CD4-positive, alpha-beta T cell (primary cell): ENCODE measurements at regions of chr13 and their contacts with region 1.

Region 1: DNA sequence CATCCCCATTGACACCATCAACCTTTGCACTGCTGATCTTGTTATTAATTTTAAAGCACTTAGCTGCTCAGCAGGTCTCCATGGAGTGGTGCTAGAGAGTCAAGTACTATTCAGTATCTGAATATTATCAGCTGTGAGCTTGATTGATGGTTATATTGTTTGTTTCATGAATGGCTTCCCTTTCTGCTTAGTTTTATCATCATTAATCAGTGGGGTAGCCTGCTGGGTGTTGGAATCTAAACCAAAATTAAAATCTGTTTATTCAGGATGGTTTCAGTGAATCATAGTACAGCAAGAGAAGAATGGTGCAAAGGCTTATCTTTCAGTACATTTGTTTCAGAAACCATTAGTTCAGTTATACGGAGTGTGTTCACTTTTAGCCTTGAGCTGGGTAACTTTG is 42.5 kb upstream of the SCEL start:
- DNase-seq: peak in 2 of 14 experiments; percentile 23 to 29
- ATAC-seq: no peak
- H3K4me3 ChIP-seq: no peak overlapping the region
- H3K4me3 Mint-ChIP-seq: no peak overlapping the region
- H3K27ac ChIP-seq: no peak overlapping the region
- H3K27ac Mint-ChIP-seq: no peak overlapping the region
- H3K4me1 ChIP-seq: no peaks in the 10 kb centered on the region
- H3K4me1 Mint-ChIP-seq: no peaks in the 10 kb centered on the region
- H3K27me3 ChIP-seq: no peaks in the 10 kb centered on the region
- H3K27me3 Mint-ChIP-seq: no peaks in the 10 kb centered on the region
- CTCF ChIP-seq: peak; percentile 25

Region 2: DNA sequence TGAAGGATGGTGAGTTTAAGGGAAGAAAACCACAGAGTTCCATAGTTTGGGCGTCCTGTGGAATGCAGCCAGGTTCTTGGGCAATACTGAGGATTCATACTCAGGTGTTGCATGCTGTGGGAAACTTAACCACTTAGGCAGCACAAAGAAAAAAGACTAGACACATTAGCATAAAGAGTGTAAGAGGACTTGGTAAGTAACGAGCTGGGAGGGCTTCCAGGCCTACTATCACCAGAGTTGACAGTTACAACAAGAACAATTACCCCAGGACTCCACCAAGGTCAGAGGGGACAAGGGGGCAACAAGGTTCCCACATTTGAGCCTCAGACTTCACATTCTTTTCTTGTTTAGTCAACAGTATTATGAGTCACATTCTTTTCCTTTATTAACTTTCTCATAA is 640.0 kb before region 1 on chr13:
- CTCF ChIA-PET with region 1: no interaction called
- POLR2A ChIA-PET with region 1: no interaction called
- intact Hi-C with region 1: no loop called
- DNase-seq: no peak
- ATAC-seq: no peak
- H3K4me3 ChIP-seq: no peak overlapping the region
- H3K4me3 Mint-ChIP-seq: no peak overlapping the region
- H3K27ac ChIP-seq: no peak overlapping the region
- H3K27ac Mint-ChIP-seq: no peak overlapping the region
- H3K4me1 ChIP-seq: no peaks in the 10 kb centered on the region
- H3K4me1 Mint-ChIP-seq: no peaks in the 10 kb centered on the region
- H3K27me3 ChIP-seq: no peaks in the 10 kb centered on the region
- H3K27me3 Mint-ChIP-seq: no peaks in the 10 kb centered on the region
- CTCF ChIP-seq: no peak

Region 3: GRCh38 chr13:77480066-77480465 is 12.9 kb before region 1 on chr13:
- CTCF ChIA-PET with region 1: interaction called, 19 read pairs
- POLR2A ChIA-PET with region 1: interaction called, 3 read pairs
- intact Hi-C with region 1: no loop called
- DNase-seq: no peak
- ATAC-seq: no peak
- H3K4me3 ChIP-seq: no peak overlapping the region
- H3K4me3 Mint-ChIP-seq: no peak overlapping the region
- H3K27ac ChIP-seq: no peak overlapping the region
- H3K27ac Mint-ChIP-seq: no peak overlapping the region
- H3K4me1 ChIP-seq: no peaks in the 10 kb centered on the region
- H3K4me1 Mint-ChIP-seq: peaks cover 12% of the 10 kb centered on the region
- H3K27me3 ChIP-seq: no peaks in the 10 kb centered on the region
- H3K27me3 Mint-ChIP-seq: no peaks in the 10 kb centered on the region
- CTCF ChIP-seq: no peak

Region 4: DNA sequence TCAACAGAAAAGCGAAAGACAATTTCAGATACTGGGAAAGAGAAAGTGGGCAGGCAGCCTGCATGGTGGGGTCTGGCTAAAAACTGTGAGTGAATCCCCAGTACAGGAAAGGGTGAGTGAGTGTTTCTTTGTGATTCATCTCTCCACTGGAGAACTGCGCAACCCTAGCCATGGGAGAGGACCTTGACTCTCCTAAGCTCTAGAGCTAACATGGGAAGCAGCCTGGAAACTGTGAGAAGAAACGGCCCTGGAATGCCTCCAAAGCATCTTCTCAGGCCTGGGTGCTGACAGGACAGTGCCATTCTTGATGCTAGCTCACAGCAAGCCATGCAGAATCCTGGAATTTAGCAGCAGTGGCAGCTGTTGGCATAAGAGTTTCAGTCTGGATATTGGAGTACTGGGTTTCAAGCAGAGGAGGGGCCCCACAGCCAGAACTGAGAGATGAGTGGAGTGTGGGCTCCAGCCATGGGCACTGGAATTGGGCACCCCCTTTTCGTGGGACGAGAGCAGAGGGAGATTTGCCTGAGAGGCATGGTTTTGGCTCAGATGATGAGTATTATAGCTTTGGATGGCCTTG is 185.8 kb after region 1 on chr13:
- CTCF ChIA-PET with region 1: no interaction called
- POLR2A ChIA-PET with region 1: no interaction called
- intact Hi-C with region 1: no loop called
- DNase-seq: no peak
- ATAC-seq: no peak
- H3K4me3 ChIP-seq: no peak overlapping the region
- H3K4me3 Mint-ChIP-seq: no peak overlapping the region
- H3K27ac ChIP-seq: no peak overlapping the region
- H3K27ac Mint-ChIP-seq: no peak overlapping the region
- H3K4me1 ChIP-seq: no peaks in the 10 kb centered on the region
- H3K4me1 Mint-ChIP-seq: no peaks in the 10 kb centered on the region
- H3K27me3 ChIP-seq: peaks cover 3 to 15% of the 10 kb centered on the region in 2 experiments
- H3K27me3 Mint-ChIP-seq: peaks cover 60% of the 10 kb centered on the region
- CTCF ChIP-seq: no peak

Region 5: GRCh38 chr13:77751513-77752456 is 258.8 kb after region 1 on chr13:
- CTCF ChIA-PET with region 1: interaction called, 3 read pairs
- POLR2A ChIA-PET with region 1: no interaction called
- intact Hi-C with region 1: loop called (anchors 2 to 5 kb)
- DNase-seq: peak in 11 of 14 experiments; percentile 13 to 77 (median 22)
- ATAC-seq: peak; percentile 92
- H3K4me3 ChIP-seq: no peak overlapping the region
- H3K4me3 Mint-ChIP-seq: no peak overlapping the region
- H3K27ac ChIP-seq: no peak overlapping the region
- H3K27ac Mint-ChIP-seq: peak overlapping the region; percentile 3
- H3K4me1 ChIP-seq: no peaks in the 10 kb centered on the region
- H3K4me1 Mint-ChIP-seq: peaks cover 32% of the 10 kb centered on the region
- H3K27me3 ChIP-seq: no peaks in the 10 kb centered on the region
- H3K27me3 Mint-ChIP-seq: no peaks in the 10 kb centered on the region
- CTCF ChIP-seq: peak; percentile 89